Panc1 (cell line): ENCODE measurements at regions of chr11 and their contacts with region 1.

Region 1: GRCh38 chr11:6328321-6328720 is 8.0 kb upstream of the CAVIN3 start:
- DNase-seq: no peak
- ATAC-seq: no peak
- H3K4me3 ChIP-seq: no peak overlapping the region
- H3K27ac ChIP-seq: no peak overlapping the region
- H3K4me1 ChIP-seq: no peaks in the 10 kb centered on the region
- H3K27me3 ChIP-seq: no peaks in the 10 kb centered on the region
- CTCF ChIP-seq: no peak

Region 2: DNA sequence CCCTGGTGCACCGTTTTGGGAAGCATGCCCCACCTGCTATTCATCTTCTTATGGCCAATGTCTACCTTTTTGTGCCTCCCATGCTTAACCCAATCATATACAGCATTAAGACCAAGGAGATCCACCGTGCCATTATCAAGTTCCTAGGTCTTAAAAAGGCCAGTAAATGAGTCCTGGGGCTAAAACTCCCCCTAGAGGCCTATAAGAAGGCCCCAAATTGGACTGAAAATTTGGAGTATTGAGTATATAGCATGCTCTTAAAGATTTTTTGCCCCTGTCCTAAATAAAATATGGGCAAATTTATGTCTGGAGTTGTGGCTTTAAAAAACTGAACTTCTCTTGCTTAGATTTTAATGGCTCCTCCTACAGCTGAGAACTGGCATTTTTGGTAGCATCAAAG is 938.1 kb before region 1 on chr11:
- CTCF ChIA-PET with region 1: no interaction called
- POLR2A ChIA-PET with region 1: no interaction called
- in situ Hi-C with region 1: no loop called
- intact Hi-C with region 1: no loop called
- DNase-seq: no peak
- ATAC-seq: no peak
- H3K4me3 ChIP-seq: no peak overlapping the region
- H3K27ac ChIP-seq: no peak overlapping the region
- H3K4me1 ChIP-seq: no peaks in the 10 kb centered on the region
- H3K27me3 ChIP-seq: no peaks in the 10 kb centered on the region
- CTCF ChIP-seq: no peak

Region 3: DNA sequence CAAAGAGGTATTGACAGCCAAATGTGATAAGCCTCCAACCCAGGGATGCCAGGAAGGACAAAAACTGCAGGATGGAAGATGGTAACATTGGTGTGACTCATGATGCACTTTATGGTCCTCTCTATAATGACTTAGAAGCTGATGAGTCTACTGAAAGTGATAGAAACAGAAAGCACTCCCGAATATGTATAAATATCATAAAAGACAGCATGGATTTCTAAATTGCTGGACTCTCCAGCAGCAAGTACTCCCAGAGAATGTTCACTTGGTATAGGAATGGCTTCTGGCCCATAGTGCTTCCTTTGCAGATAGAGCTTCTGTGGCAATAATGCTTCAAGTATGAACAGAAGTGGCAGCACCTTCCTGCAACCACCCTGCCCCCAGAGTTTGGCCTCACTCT is 158.1 kb before region 1 on chr11 and contains the start of gene OR52B2:
- CTCF ChIA-PET with region 1: interaction called, 15 read pairs
- POLR2A ChIA-PET with region 1: no interaction called
- in situ Hi-C with region 1: no loop called
- intact Hi-C with region 1: no loop called
- DNase-seq: no peak
- ATAC-seq: no peak
- H3K4me3 ChIP-seq: no peak within 1 kb of the TSS
- H3K27ac ChIP-seq: no peak within 1 kb of the TSS
- H3K4me1 ChIP-seq: no peaks in the 10 kb centered on the region
- H3K27me3 ChIP-seq: peaks cover 13% of the 10 kb centered on the region
- CTCF ChIP-seq: no peak
- total RNA-seq, gene OR52B2: not detected